Naive thymus-derived CD4-positive, alpha-beta T cell (primary cell): ENCODE measurements at regions of chr4 and their contacts with region 1.

Region 1: DNA sequence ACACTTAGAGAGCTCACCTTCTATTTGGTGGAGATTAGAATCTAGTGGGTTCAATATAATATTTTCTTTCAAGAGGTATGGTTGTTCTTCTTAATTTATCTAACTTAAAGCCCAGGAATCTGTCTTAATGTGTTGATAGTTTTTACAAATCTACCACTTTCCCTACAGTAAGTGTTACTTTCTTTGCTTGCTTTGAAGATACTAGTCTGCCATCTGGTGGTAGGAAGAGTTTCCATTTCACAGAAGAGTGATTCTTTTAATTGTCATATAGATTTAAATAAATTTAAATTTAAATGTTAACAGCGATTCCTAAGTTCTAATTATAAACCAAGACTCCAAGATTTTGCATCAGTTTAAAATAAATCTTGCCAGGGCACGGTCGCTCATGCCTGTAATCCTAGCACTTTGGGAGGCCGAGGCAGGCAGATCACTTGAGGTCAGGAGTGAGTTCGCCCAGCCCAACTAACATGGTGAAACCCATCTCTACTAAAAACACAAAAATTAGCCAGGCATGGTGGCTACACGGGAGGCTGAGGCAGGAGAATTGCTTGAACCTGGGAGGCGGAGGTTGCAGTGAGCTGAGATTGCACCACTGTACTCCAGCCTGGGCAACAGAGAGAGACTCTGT is 43.5 kb downstream of the NUDT9 start:
- DNase-seq: peak in 7 of 9 donors; percentile 27 to 55 (median 40)
- ATAC-seq: peak; percentile 55
- H3K4me3 ChIP-seq: no peak overlapping the region
- H3K4me3 Mint-ChIP-seq: no peak overlapping the region
- H3K27ac ChIP-seq: no peak overlapping the region
- H3K27ac Mint-ChIP-seq: no peak overlapping the region
- H3K4me1 ChIP-seq: no peaks in the 10 kb centered on the region
- H3K4me1 Mint-ChIP-seq: peaks cover 0 to 3% (median 0%) of the 10 kb centered on the region in 7 donors
- H3K27me3 ChIP-seq: no peaks in the 10 kb centered on the region
- H3K27me3 Mint-ChIP-seq: no peaks in the 10 kb centered on the region

Region 2: DNA sequence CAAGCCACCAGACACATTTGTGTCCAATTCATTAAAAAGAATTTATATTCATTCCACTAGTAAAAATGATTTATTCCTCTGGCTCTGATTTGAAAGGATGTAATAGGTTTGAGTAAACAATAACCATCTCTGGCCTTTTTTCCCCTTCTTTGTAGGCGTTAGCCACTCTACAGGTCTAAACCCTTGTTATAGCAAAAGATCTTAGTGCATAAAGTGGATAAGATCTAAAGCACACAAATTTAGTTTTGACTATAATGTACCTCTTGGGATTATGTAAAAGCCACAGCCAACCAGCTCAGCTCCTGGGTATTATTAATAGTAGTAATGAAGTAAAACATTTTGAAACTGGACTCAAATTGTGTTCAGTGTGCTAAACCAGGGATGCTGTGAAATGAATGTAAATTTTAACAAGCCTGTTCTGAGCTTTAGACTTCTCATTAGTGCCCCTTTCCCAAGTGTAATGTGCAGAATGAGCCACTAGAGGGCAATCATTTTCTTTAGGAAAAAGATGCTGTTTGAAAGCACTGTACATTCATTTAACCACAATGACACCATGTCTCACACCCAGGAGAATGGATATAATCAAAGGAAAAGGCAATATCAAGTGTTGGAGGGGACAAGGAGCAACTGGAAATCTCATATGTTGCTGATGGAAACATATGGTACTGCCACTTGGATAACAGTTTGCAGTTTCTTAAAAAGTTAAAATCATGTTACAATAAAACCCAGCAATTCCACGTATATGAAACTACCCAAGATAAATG is 315.2 kb before region 1 on chr4:
- CTCF ChIA-PET with region 1: no interaction called
- POLR2A ChIA-PET with region 1: no interaction called
- intact Hi-C with region 1: loop called (anchors 1 kb)
- DNase-seq: peak in 8 of 9 donors; percentile 32 to 71 (median 55)
- ATAC-seq: peak; percentile 85
- H3K4me3 ChIP-seq: no peak overlapping the region
- H3K4me3 Mint-ChIP-seq: no peak overlapping the region
- H3K27ac ChIP-seq: no peak overlapping the region
- H3K27ac Mint-ChIP-seq: no peak overlapping the region
- H3K4me1 ChIP-seq: no peaks in the 10 kb centered on the region
- H3K4me1 Mint-ChIP-seq: peaks cover 0 to 4% (median 0%) of the 10 kb centered on the region in 7 donors
- H3K27me3 ChIP-seq: no peaks in the 10 kb centered on the region
- H3K27me3 Mint-ChIP-seq: no peaks in the 10 kb centered on the region

Region 3: DNA sequence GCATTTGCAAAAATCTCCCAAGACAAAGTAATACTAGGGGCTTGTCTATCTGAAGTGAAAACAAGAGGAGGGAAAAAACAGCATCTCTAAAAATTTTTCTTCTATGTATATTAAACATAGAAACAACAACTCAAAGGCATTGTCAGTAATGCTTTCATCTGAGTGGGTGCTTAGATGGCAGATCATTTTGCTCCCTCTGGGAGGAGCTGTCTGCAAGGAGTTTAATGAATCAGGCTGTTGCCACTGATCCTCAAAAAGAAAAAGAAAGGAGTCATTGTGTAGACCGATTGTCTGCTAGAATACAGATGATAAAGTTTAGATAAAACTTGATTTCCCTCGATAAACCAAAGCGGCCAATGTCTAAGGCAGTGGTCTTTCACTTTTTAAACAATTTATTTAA is 195.7 kb before region 1 on chr4:
- CTCF ChIA-PET with region 1: interaction called, 3 read pairs
- POLR2A ChIA-PET with region 1: no interaction called
- intact Hi-C with region 1: loop called in 1 of 2 experiments (anchors 1 kb)
- DNase-seq: peak in 1 of 9 donors; percentile 3
- ATAC-seq: no peak
- H3K4me3 ChIP-seq: no peak overlapping the region
- H3K4me3 Mint-ChIP-seq: no peak overlapping the region
- H3K27ac ChIP-seq: no peak overlapping the region
- H3K27ac Mint-ChIP-seq: no peak overlapping the region
- H3K4me1 ChIP-seq: no peaks in the 10 kb centered on the region
- H3K4me1 Mint-ChIP-seq: no peaks in the 10 kb centered on the region
- H3K27me3 ChIP-seq: peaks cover 0 to 3% of the 10 kb centered on the region in 2 donors
- H3K27me3 Mint-ChIP-seq: peaks cover 0 to 14% (median 3%) of the 10 kb centered on the region in 5 donors

Region 4: GRCh38 chr4:87375719-87376291 is 90.0 kb before region 1 on chr4:
- CTCF ChIA-PET with region 1: interaction called, 63 read pairs
- POLR2A ChIA-PET with region 1: no interaction called
- intact Hi-C with region 1: loop called (anchors 1 kb)
- DNase-seq: peak in 4 of 9 donors; percentile 18 to 36 (median 24)
- ATAC-seq: peak; percentile 62
- H3K4me3 ChIP-seq: no peak overlapping the region
- H3K4me3 Mint-ChIP-seq: no peak overlapping the region
- H3K27ac ChIP-seq: no peak overlapping the region
- H3K27ac Mint-ChIP-seq: no peak overlapping the region
- H3K4me1 ChIP-seq: no peaks in the 10 kb centered on the region
- H3K4me1 Mint-ChIP-seq: peaks cover 0 to 9% (median 0%) of the 10 kb centered on the region in 7 donors
- H3K27me3 ChIP-seq: no peaks in the 10 kb centered on the region
- H3K27me3 Mint-ChIP-seq: no peaks in the 10 kb centered on the region

Region 5: GRCh38 chr4:87422104-87423052 is 43.5 kb before region 1 on chr4 and contains the start of gene NUDT9:
- CTCF ChIA-PET with region 1: interaction called, 7 read pairs
- POLR2A ChIA-PET with region 1: no interaction called
- intact Hi-C with region 1: loop called (anchors 1 kb)
- DNase-seq: peak; percentile 74 to 92 (median 89)
- ATAC-seq: peak; percentile 92
- H3K4me3 ChIP-seq: peak within 1 kb of the TSS; percentile 96
- H3K4me3 Mint-ChIP-seq: peak within 1 kb of the TSS; percentile 94 to 100 (median 98)
- H3K27ac ChIP-seq: peak within 1 kb of the TSS; percentile 85
- H3K27ac Mint-ChIP-seq: peak within 1 kb of the TSS; percentile 97 to 100 (median 99)
- H3K4me1 ChIP-seq: peaks cover 17% of the 10 kb centered on the region in 2 donors
- H3K4me1 Mint-ChIP-seq: peaks cover 14 to 59% (median 48%) of the 10 kb centered on the region in 7 donors
- H3K27me3 ChIP-seq: no peaks in the 10 kb centered on the region
- H3K27me3 Mint-ChIP-seq: no peaks in the 10 kb centered on the region
- total RNA-seq, gene NUDT9: 9.7 to 18.1 (median 10.5) TPM

Region 6: GRCh38 chr4:88549815-88550214 is 1084.0 kb after region 1 on chr4:
- CTCF ChIA-PET with region 1: no interaction called
- POLR2A ChIA-PET with region 1: no interaction called
- intact Hi-C with region 1: no loop called
- DNase-seq: no peak
- ATAC-seq: no peak
- H3K4me3 ChIP-seq: no peak overlapping the region
- H3K4me3 Mint-ChIP-seq: no peak overlapping the region
- H3K27ac ChIP-seq: no peak overlapping the region
- H3K27ac Mint-ChIP-seq: no peak overlapping the region
- H3K4me1 ChIP-seq: no peaks in the 10 kb centered on the region
- H3K4me1 Mint-ChIP-seq: no peaks in the 10 kb centered on the region
- H3K27me3 ChIP-seq: no peaks in the 10 kb centered on the region
- H3K27me3 Mint-ChIP-seq: peaks cover 0 to 2% (median 0%) of the 10 kb centered on the region in 5 donors